Activated CD4-positive, alpha-beta T cell treated with anti-CD3 and anti-CD28 coated beads, Interleukin-2, amount 10 ng/mL, durations not matched to agents 24 days and 14 days (primary cell): ENCODE measurements at regions of chr2 and their contacts with region 1.

Region 1: GRCh38 chr2:3423492-3424175 is 44.1 kb downstream of the TRAPPC12 start:
- DNase-seq: peak; percentile 93
- H3K4me3 Mint-ChIP-seq: no peak overlapping the region
- H3K27ac Mint-ChIP-seq: no peak overlapping the region
- H3K4me1 Mint-ChIP-seq: peaks cover 2% of the 10 kb centered on the region
- H3K27me3 Mint-ChIP-seq: no peaks in the 10 kb centered on the region

Region 2: DNA sequence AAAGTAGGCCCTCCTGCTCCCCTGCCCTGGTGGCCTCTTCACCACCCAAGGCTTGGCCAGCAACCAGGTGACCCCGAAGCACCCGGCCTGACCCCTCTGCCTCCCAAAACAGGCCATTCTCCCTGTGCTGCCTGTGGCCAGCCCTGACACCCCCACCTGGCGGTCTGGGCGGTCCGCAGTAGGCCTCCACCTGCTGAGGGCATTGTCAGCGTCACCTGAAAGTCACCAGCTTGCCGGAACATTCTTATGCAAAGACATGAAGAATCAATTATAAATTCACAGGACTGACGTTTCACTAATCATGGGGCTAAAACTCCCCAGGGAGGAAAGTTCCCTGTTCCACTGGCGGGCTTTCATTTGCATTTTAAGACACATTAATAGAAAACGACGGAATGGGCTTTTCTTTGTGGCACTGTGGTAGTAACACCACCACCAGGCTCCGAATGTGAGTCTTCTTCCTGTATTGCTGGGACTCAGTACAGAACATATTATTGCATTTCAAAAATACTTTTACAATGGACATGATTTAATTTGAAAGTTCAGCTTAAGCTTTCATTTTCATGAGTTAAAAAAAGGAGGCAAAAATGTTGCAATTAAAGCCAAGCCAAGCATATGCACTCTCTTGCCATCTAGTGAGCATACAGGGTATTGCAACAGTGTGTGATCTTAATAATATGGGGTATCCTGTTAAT is 38.3 kb after region 1 on chr2:
- intact Hi-C with region 1: loop called (anchors 5 kb)
- DNase-seq: peak; percentile 84
- H3K4me3 Mint-ChIP-seq: no peak overlapping the region
- H3K27ac Mint-ChIP-seq: no peak overlapping the region
- H3K4me1 Mint-ChIP-seq: peaks cover 4% of the 10 kb centered on the region
- H3K27me3 Mint-ChIP-seq: no peaks in the 10 kb centered on the region